Sigmoid colon (tissue), 7 donors: ENCODE measurements at regions of chr22 and their contacts with region 1.

Region 1: GRCh38 chr22:33766091-33766490 is 154.2 kb downstream of the LARGE1 start:
- DNase-seq: no peak
- H3K4me3 ChIP-seq: no peak overlapping the region
- H3K27ac ChIP-seq: no peak overlapping the region
- H3K4me1 ChIP-seq: peaks cover 0 to 7% (median 2%) of the 10 kb centered on the region in 4 donors
- H3K27me3 ChIP-seq: no peaks in the 10 kb centered on the region
- CTCF ChIP-seq: no peak
- EP300 ChIP-seq: no peak
- POLR2A ChIP-seq: no peak

Region 2: DNA sequence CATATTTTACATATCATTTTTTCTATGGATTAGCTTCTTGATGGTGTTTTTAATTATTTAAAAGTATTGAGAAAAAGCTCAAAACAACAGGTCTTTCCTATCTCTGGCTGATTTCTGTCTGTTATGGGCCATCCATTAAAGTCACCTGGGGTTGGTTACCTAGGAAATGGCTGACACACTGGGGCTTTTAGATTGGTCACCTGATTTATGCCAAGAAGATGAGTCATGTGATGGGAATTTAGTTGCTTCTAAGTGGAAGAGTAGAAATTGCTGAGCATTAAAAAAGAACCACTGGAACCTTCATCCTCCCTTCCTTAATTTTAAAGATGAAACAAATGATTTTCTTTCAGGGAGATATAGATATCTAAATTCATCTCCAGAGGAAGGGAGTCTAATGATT is 203.0 kb after region 1 on chr22:
- intact Hi-C with region 1: no loop called
- DNase-seq: no peak
- H3K4me3 ChIP-seq: no peak overlapping the region
- H3K27ac ChIP-seq: no peak overlapping the region
- H3K4me1 ChIP-seq: no peaks in the 10 kb centered on the region
- H3K27me3 ChIP-seq: no peaks in the 10 kb centered on the region
- CTCF ChIP-seq: no peak
- EP300 ChIP-seq: no peak
- POLR2A ChIP-seq: no peak

Region 3: DNA sequence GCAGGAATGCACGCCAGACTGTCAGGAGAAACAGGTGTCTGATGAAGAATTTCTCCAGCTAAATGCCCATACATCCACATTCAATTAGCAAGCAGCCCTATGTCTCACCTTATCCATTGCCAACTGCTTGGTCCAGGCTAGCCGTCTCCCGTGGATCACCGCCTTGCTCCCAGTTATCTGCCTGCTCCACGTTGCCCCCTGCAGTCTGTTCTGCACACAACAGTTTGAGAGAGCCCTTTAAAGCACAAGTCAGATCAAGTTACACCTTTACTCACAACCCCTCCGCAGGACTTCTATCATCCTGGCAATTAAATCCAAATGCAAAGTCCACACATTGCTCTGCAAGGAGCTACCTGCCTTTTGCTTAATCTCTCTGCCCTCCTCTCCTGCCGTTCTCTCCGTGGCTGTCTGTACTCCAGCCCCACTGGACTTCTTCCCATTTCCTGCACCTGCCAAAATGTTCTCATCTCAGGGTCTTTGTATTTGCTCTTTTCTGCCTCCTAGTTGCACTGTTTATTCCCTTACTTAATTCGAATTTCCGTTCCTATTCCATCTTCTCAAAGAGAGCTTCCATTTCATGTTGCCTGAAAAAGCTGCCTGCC is 339.5 kb after region 1 on chr22:
- intact Hi-C with region 1: loop called (anchors 10 kb)
- DNase-seq: peak; percentile 76
- H3K4me3 ChIP-seq: no peak overlapping the region
- H3K27ac ChIP-seq: no peak overlapping the region
- H3K4me1 ChIP-seq: no peaks in the 10 kb centered on the region
- H3K27me3 ChIP-seq: no peaks in the 10 kb centered on the region
- CTCF ChIP-seq: peak; percentile 53 to 77 (median 65)
- EP300 ChIP-seq: no peak
- POLR2A ChIP-seq: no peak